CD4-positive, alpha-beta memory T cell (primary cell): ENCODE measurements at regions of chr15 and their contacts with region 1.

Region 1: GRCh38 chr15:60592371-60593169 is 113.6 kb upstream of the ICE2 start:
- DNase-seq: peak; percentile 88 to 91 (median 90)
- H3K4me3 ChIP-seq: peak overlapping the region; percentile 39 to 75
- H3K4me3 Mint-ChIP-seq: peak overlapping the region; percentile 80 to 90 (median 87)
- H3K27ac ChIP-seq: peak overlapping the region; percentile 92
- H3K27ac Mint-ChIP-seq: peak overlapping the region; percentile 82 to 94 (median 92)
- H3K4me1 ChIP-seq: peaks cover 36% of the 10 kb centered on the region
- H3K4me1 Mint-ChIP-seq: peaks cover 28 to 55% (median 37%) of the 10 kb centered on the region in 4 donors
- H3K27me3 ChIP-seq: no peaks in the 10 kb centered on the region
- H3K27me3 Mint-ChIP-seq: no peaks in the 10 kb centered on the region

Region 2: GRCh38 chr15:60478566-60479360 is 113.8 kb before region 1 on chr15 and contains the start of gene ICE2:
- CTCF ChIA-PET with region 1: no interaction called
- POLR2A ChIA-PET with region 1: interaction called, 5 read pairs
- intact Hi-C with region 1: loop called (anchors 1 kb)
- DNase-seq: peak; percentile 93 to 97 (median 94)
- H3K4me3 ChIP-seq: peak within 1 kb of the TSS; percentile 72 to 85
- H3K4me3 Mint-ChIP-seq: peak within 1 kb of the TSS; percentile 91 to 100 (median 98)
- H3K27ac ChIP-seq: peak within 1 kb of the TSS; percentile 88
- H3K27ac Mint-ChIP-seq: peak within 1 kb of the TSS; percentile 96 to 100 (median 99)
- H3K4me1 ChIP-seq: peaks cover 38% of the 10 kb centered on the region
- H3K4me1 Mint-ChIP-seq: peaks cover 37 to 55% (median 46%) of the 10 kb centered on the region in 4 donors
- H3K27me3 ChIP-seq: no peaks in the 10 kb centered on the region
- H3K27me3 Mint-ChIP-seq: no peaks in the 10 kb centered on the region
- total RNA-seq, gene ICE2: 63.7 to 68.4 TPM

Region 3: DNA sequence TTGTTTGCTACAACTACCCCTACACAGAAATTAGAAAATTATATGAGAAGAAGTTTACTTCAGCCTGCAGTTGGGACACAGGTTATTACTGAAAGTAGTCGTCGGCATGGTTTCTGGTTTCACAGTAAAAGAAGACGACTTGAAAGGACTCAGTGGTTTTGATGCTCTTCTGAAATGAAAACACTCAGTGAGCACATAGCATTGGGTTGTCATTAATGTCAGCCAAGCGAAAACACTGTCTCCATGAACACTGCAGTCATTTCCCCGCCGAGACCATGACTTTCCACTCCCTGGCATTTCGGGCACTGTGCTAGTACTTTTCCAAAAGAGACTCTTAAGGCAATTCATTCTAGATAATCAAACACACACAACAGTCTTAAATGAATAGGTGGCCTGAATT is 44.5 kb before region 1 on chr15:
- CTCF ChIA-PET with region 1: interaction called, 53 read pairs
- POLR2A ChIA-PET with region 1: interaction called, 381 read pairs
- intact Hi-C with region 1: no loop called
- DNase-seq: peak; percentile 47 to 68 (median 58)
- H3K4me3 ChIP-seq: no peak overlapping the region
- H3K4me3 Mint-ChIP-seq: peak overlapping the region; percentile 68 to 86 (median 77)
- H3K27ac ChIP-seq: peak overlapping the region; percentile 68
- H3K27ac Mint-ChIP-seq: peak overlapping the region; percentile 92 to 99 (median 97)
- H3K4me1 ChIP-seq: peaks cover 100% of the 10 kb centered on the region
- H3K4me1 Mint-ChIP-seq: peaks cover 80 to 100% (median 90%) of the 10 kb centered on the region in 4 donors
- H3K27me3 ChIP-seq: no peaks in the 10 kb centered on the region
- H3K27me3 Mint-ChIP-seq: no peaks in the 10 kb centered on the region

Region 4: GRCh38 chr15:60695713-60696522 is 103.3 kb after region 1 on chr15:
- CTCF ChIA-PET with region 1: no interaction called
- POLR2A ChIA-PET with region 1: interaction called, 17 read pairs
- intact Hi-C with region 1: loop called (anchors 5 kb)
- DNase-seq: peak in 4 of 5 donors; percentile 18 to 79 (median 29)
- H3K4me3 ChIP-seq: peak overlapping the region; percentile 29 to 43
- H3K4me3 Mint-ChIP-seq: peak overlapping the region; percentile 48 to 87 (median 84)
- H3K27ac ChIP-seq: peak overlapping the region; percentile 37
- H3K27ac Mint-ChIP-seq: peak overlapping the region; percentile 55 to 95 (median 92)
- H3K4me1 ChIP-seq: peaks cover 67% of the 10 kb centered on the region
- H3K4me1 Mint-ChIP-seq: peaks cover 68 to 84% (median 78%) of the 10 kb centered on the region in 4 donors
- H3K27me3 ChIP-seq: no peaks in the 10 kb centered on the region
- H3K27me3 Mint-ChIP-seq: no peaks in the 10 kb centered on the region

Region 5: DNA sequence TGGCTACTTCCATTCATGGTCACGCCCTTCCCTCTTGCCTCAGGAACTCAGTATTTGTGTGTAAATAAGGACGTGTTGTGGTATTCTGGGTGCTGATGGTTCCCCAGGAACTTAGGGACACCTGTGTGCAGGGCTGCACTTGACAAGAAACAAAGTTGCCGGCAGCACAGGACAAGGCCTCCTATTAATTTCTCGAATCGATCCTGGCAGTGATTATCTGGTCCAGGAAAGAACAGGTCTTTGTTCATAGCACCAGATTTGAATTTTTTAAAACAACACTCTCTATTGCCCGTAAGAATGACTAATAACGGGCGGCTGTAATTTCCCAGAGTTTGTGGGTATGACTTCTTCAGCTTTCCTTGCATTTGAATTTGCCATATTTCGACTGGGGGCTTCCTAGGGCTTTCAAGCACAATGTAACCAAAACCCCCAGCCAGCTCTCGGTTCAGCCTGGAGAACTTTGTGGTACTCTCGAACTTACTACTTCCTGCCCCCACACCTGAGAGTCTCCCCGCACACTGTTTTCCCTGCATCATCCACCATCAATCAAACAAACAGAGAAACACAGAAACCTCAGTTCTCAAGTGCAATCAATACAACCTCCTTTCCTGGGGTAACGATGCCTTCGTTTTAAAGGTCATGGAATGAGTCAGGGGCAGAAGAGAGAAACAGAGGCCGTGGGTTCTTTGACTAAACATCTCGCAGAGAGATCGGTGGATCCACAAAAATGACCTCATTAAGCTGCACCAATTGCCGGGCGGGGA is 128.1 kb after region 1 on chr15:
- CTCF ChIA-PET with region 1: interaction called, 3 read pairs
- POLR2A ChIA-PET with region 1: interaction called, 47 read pairs
- intact Hi-C with region 1: loop called (anchors 5 kb)
- DNase-seq: peak; percentile 59 to 77 (median 64)
- H3K4me3 ChIP-seq: peak overlapping the region; percentile 13 to 42
- H3K4me3 Mint-ChIP-seq: peak overlapping the region; percentile 71 to 88 (median 78)
- H3K27ac ChIP-seq: peak overlapping the region; percentile 72
- H3K27ac Mint-ChIP-seq: peak overlapping the region; percentile 83 to 98 (median 94)
- H3K4me1 ChIP-seq: peaks cover 62% of the 10 kb centered on the region
- H3K4me1 Mint-ChIP-seq: peaks cover 51 to 76% (median 57%) of the 10 kb centered on the region in 4 donors
- H3K27me3 ChIP-seq: no peaks in the 10 kb centered on the region
- H3K27me3 Mint-ChIP-seq: no peaks in the 10 kb centered on the region

Region 6: DNA sequence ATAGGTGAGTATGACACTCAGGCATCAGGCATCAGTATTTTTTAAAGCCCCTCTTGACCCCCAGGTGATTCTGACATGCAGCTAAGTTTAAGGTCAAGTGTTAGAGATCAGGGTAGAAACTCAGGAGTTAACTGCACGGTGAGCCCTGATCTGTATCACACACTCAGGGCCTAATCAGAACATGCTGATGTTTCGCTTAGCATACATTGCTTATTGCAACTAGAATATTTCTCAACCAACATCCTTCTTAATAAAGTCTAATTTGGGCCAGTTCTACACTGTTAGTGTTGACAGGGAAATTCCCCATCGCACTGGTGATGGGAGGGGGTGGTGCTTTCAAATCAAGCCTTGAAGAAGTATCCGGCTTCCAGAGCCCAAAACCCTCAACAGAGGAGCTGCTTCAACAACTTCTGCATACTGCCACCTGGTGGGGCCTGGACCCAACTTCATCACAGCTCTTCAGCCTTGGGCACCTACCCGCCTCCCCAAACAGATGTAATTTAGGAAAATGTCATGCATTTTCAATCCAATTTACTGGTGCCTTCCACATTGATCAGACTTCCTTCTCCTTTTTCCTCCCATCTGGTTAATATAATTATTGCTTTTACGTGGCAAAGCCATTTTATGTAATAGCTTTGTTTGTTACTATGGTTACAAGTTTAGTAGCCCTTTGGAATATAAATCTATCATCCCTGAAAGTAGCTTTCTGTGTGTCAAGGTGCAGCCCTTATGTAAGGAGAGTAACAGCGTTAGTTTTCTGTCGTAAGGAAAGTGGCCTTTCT is 324.3 kb after region 1 on chr15:
- CTCF ChIA-PET with region 1: interaction called, 28 read pairs
- POLR2A ChIA-PET with region 1: interaction called, 21 read pairs
- intact Hi-C with region 1: no loop called
- DNase-seq: peak; percentile 85 to 95 (median 88)
- H3K4me3 ChIP-seq: no peak overlapping the region
- H3K4me3 Mint-ChIP-seq: peak overlapping the region in 5 of 8 donors; percentile 18 to 72 (median 57)
- H3K27ac ChIP-seq: peak overlapping the region; percentile 55
- H3K27ac Mint-ChIP-seq: peak overlapping the region; percentile 82 to 98 (median 94)
- H3K4me1 ChIP-seq: peaks cover 12% of the 10 kb centered on the region
- H3K4me1 Mint-ChIP-seq: peaks cover 7 to 17% (median 10%) of the 10 kb centered on the region in 4 donors
- H3K27me3 ChIP-seq: no peaks in the 10 kb centered on the region
- H3K27me3 Mint-ChIP-seq: no peaks in the 10 kb centered on the region